ENCODE measurements at regions of chr11 and their contacts with region 1.

Region 1: DNA sequence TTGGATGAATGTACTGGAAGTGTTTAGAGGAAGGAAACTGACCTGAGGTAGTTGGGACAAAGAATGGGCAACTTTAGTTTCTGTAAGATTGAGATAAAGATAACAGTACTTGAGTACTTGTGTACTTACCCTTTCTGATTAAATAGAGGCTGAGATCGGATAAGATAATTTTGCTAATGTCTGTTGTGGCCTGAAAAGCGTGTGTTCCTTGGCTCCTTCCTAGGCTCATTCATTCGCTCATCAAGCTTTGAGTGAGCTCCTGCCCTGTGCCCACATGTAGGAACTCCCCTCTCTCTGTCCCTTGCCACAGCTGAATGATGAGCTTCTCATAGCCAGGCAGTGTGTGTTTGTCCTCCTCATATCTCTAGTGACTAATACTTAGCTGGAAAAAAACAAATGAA is 118.2 kb downstream of the DBX1 start:
- DNase-seq: no peak
- ATAC-seq: peak in 1 of 8 donors; percentile 22
- H3K4me3 ChIP-seq: no peak overlapping the region
- H3K27ac ChIP-seq: peak overlapping the region in 4 of 10 donors; percentile 19 to 74 (median 22)
- H3K4me1 ChIP-seq: peaks cover 5 to 68% (median 18%) of the 10 kb centered on the region in 9 donors
- H3K27me3 ChIP-seq: no peaks in the 10 kb centered on the region
- CTCF ChIP-seq: no peak

Region 2: GRCh38 chr11:19978668-19979518 is 63.2 kb before region 1 on chr11:
- intact Hi-C with region 1: loop called in 1 of 10 experiments (anchors 10 kb)
- DNase-seq: no peak
- ATAC-seq: peak in 3 of 8 donors; percentile 20 to 69 (median 49)
- H3K4me3 ChIP-seq: no peak overlapping the region
- H3K27ac ChIP-seq: no peak overlapping the region
- H3K4me1 ChIP-seq: peaks cover 3 to 53% (median 29%) of the 10 kb centered on the region in 9 donors
- H3K27me3 ChIP-seq: no peaks in the 10 kb centered on the region
- CTCF ChIP-seq: no peak

Measured in heart right ventricle (tissue), 16 donors.